ENCODE measurements at regions of chr20 and their contacts with region 1.

Region 1: DNA sequence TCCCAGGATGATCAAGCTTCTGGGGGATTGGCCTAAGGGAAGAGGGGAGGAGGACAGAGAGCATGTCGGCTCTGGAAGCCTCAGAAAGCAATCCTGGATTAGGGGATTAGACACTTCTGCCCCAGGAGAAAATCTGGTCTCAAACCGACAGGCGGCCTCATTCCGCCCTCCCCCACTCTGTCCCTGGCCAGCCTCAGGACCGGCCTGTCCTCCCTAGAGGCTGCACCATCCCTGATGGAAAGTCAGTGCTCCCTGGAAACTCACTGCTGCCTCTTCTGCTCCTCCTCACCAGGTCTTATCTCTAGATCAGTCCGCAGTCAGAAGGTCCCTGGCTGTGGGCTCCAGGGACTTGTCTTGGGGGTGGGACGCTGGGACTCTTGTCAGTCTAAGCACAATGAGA is 905 bp upstream of the SLC12A5 start:
- DNase-seq: no peak
- H3K4me3 ChIP-seq: no peak overlapping the region
- H3K27ac ChIP-seq: no peak overlapping the region
- H3K4me1 ChIP-seq: no peaks in the 10 kb centered on the region
- H3K27me3 ChIP-seq: peaks cover 27% of the 10 kb centered on the region
- CTCF ChIP-seq: no peak

Region 2: GRCh38 chr20:46070215-46070900 is 42.2 kb after region 1 on chr20:
- CTCF ChIA-PET with region 1: no interaction called
- POLR2A ChIA-PET with region 1: no interaction called
- intact Hi-C with region 1: no loop called
- DNase-seq: peak in 1 of 2 experiments; percentile 17
- H3K4me3 ChIP-seq: no peak overlapping the region
- H3K27ac ChIP-seq: no peak overlapping the region
- H3K4me1 ChIP-seq: no peaks in the 10 kb centered on the region
- H3K27me3 ChIP-seq: no peaks in the 10 kb centered on the region
- CTCF ChIP-seq: no peak

Region 3: DNA sequence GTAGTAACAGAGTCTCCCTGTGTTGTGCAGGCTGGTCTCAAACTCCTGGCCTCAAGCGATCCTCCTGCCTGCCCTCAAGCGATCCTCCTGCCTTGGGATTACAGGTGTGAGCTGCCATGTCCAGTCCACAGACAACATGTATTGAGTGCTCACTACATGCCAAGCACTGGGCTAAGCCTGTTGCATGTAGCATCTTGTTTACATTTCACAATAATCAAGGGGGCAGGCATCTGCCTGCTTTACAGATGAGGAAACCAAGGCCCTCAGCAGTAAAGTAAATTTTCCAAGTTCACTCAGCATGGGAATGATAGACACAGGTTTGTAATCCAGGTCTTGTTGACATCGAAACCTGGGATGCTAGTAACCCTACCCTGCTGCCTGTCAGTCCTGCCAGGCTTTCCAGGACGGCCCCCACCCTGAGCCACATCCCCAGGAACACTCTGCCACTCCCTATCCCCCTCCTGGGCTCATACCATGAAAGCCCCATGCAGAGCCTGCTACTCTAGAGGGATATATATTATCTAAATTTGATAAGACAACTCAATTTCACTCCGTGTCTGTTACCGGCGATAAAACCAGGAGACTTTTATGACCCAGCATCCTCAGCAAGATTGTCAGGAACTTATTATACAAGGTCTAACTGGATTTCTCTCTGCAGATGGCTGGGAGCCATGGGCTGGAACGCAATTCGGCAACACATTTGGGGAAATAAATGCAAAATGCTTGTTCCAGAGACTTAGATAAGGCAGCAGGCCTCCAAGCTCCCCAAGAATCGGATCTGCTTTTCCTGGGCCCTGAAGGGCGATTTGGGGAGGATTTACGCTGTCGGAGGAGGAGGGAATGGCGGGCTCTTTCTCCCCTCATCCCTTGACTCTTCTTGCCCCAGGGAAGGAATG is 120.5 kb after region 1 on chr20:
- CTCF ChIA-PET with region 1: interaction called, 18 read pairs
- POLR2A ChIA-PET with region 1: no interaction called
- intact Hi-C with region 1: no loop called
- DNase-seq: no peak
- H3K4me3 ChIP-seq: no peak overlapping the region
- H3K27ac ChIP-seq: no peak overlapping the region
- H3K4me1 ChIP-seq: no peaks in the 10 kb centered on the region
- H3K27me3 ChIP-seq: peaks cover 98% of the 10 kb centered on the region
- CTCF ChIP-seq: no peak

Measured in PC-9 (cell line).